ENCODE measurements at regions of chr5 and their contacts with region 1.

Region 1: DNA sequence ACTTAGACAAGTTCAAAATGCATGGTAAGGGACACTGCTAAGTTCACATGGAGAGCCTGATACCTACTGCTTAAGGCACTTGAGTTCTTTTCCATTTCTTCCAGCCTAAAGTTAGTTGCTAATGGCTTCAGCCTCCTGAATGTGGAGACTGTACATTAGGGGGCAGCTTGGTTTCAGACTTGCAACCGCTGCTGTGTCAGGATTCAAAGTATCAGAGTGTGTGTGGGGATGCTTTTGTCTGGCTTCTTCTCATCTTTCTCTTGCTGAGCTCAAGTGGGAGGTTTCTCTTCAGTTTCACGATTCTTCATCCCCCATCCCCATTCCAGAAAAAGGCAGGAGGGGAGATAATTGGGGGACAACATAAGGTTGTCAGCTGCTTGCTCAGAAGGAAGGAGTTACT is 49.4 kb downstream of the ATP10B start:
- DNase-seq: peak; percentile 43
- H3K4me3 Mint-ChIP-seq: no peak overlapping the region
- H3K27ac Mint-ChIP-seq: no peak overlapping the region
- H3K4me1 Mint-ChIP-seq: no peaks in the 10 kb centered on the region
- H3K27me3 Mint-ChIP-seq: no peaks in the 10 kb centered on the region
- CTCF ChIP-seq: peak; percentile 27

Region 2: GRCh38 chr5:160649304-160649703 is 153.3 kb before region 1 on chr5:
- CTCF ChIA-PET with region 1: interaction called, 10 read pairs
- POLR2A ChIA-PET with region 1: no interaction called
- intact Hi-C with region 1: no loop called
- DNase-seq: peak; percentile 56
- H3K4me3 Mint-ChIP-seq: no peak overlapping the region
- H3K27ac Mint-ChIP-seq: no peak overlapping the region
- H3K4me1 Mint-ChIP-seq: no peaks in the 10 kb centered on the region
- H3K27me3 Mint-ChIP-seq: no peaks in the 10 kb centered on the region
- CTCF ChIP-seq: peak; percentile 56

Region 3: GRCh38 chr5:161105525-161105924 is 302.9 kb after region 1 on chr5:
- CTCF ChIA-PET with region 1: no interaction called
- POLR2A ChIA-PET with region 1: no interaction called
- intact Hi-C with region 1: no loop called
- DNase-seq: peak; percentile 46
- H3K4me3 Mint-ChIP-seq: no peak overlapping the region
- H3K27ac Mint-ChIP-seq: no peak overlapping the region
- H3K4me1 Mint-ChIP-seq: no peaks in the 10 kb centered on the region
- H3K27me3 Mint-ChIP-seq: no peaks in the 10 kb centered on the region
- CTCF ChIP-seq: no peak

Region 4: GRCh38 chr5:161535762-161536161 is 733.2 kb after region 1 on chr5:
- CTCF ChIA-PET with region 1: interaction called, 3 read pairs
- POLR2A ChIA-PET with region 1: interaction called, 3 read pairs
- intact Hi-C with region 1: loop called (anchors 10 kb)
- DNase-seq: peak; percentile 24
- H3K4me3 Mint-ChIP-seq: no peak overlapping the region
- H3K27ac Mint-ChIP-seq: no peak overlapping the region
- H3K4me1 Mint-ChIP-seq: no peaks in the 10 kb centered on the region
- H3K27me3 Mint-ChIP-seq: peaks cover 72% of the 10 kb centered on the region
- CTCF ChIP-seq: peak; percentile 28

Region 5: DNA sequence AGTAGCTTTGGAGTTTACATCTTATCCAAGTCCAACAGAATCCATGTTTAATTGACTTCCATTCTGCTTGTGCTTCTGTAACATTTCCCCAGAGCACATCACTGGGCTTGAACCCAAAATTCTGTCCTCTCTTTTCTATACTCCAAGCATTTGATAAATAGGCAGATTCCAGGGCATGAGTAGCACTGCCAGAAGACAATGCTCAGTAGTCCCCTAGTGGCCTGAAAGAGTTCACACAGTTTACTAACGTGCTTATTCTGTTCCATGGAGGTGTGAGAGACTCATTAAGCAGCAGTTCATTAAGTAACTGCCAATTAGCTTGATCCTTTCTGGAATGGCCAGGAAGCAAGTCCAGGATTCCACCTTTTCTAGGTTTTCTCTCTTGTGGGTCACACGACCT is 873.5 kb after region 1 on chr5:
- CTCF ChIA-PET with region 1: no interaction called
- POLR2A ChIA-PET with region 1: no interaction called
- intact Hi-C with region 1: loop called (anchors 10 kb)
- DNase-seq: peak; percentile 54
- H3K4me3 Mint-ChIP-seq: no peak overlapping the region
- H3K27ac Mint-ChIP-seq: no peak overlapping the region
- H3K4me1 Mint-ChIP-seq: no peaks in the 10 kb centered on the region
- H3K27me3 Mint-ChIP-seq: peaks cover 29% of the 10 kb centered on the region
- CTCF ChIP-seq: peak; percentile 73

Region 6: GRCh38 chr5:162230348-162230747 is 1427.8 kb after region 1 on chr5:
- CTCF ChIA-PET with region 1: no interaction called
- POLR2A ChIA-PET with region 1: no interaction called
- intact Hi-C with region 1: no loop called
- DNase-seq: no peak
- H3K4me3 Mint-ChIP-seq: no peak overlapping the region
- H3K27ac Mint-ChIP-seq: no peak overlapping the region
- H3K4me1 Mint-ChIP-seq: peaks cover 20% of the 10 kb centered on the region
- H3K27me3 Mint-ChIP-seq: no peaks in the 10 kb centered on the region
- CTCF ChIP-seq: no peak

Measured in MCF 10A (cell line).